Right ventricle myocardium inferior (tissue), 1 donor: ENCODE measurements at regions of chr2 and their contacts with region 1.

Region 1: GRCh38 chr2:167212014-167212648 is 323.9 kb downstream of the XIRP2 start:
- DNase-seq: no peak
- ATAC-seq: no peak

Region 2: GRCh38 chr2:166539340-166540162 is 672.6 kb before region 1 on chr2:
- intact Hi-C with region 1: loop called (anchors 10 kb)
- DNase-seq: no peak
- ATAC-seq: no peak

Region 3: GRCh38 chr2:167127135-167127534 is 85.0 kb before region 1 on chr2:
- intact Hi-C with region 1: loop called (anchors 5 kb)
- DNase-seq: no peak
- ATAC-seq: peak; percentile 44

Region 4: DNA sequence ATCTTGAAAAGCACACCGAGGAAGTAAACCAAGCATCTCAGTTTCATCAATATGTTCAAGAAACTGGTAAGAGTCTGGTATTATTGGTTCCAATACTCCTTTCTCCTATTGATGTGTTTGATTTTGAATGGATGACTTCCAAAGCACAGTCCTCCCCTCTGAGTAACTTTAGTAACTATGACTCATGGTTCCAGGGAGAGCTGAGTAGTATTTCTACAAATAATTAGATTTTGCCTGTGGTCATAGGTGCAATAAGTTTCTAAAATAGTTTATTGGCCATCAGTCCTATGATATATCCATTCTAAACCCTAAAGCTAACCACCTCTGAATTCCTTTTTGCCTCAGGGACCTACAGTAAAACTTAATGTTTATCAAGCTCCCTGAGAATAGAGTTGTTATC is 28.5 kb after region 1 on chr2:
- intact Hi-C with region 1: no loop called
- DNase-seq: no peak
- ATAC-seq: no peak

Region 5: DNA sequence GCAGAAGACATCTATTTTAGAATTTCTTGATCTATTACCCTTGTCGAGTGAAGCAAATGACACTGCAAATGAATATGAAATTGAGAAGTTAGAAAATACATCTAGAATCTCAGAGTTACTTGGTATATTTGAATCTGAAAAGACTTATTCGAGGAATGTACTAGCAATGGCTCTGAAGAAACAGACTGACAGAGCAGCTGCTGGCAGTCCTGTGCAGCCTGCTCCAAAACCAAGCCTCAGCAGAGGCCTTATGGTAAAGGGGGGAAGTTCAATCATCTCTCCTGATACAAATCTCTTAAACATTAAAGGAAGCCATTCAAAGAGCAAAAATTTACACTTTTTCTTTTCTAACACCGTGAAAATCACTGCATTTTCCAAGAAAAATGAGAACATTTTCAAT is 46.6 kb after region 1 on chr2:
- intact Hi-C with region 1: no loop called
- DNase-seq: no peak
- ATAC-seq: no peak

Region 6: DNA sequence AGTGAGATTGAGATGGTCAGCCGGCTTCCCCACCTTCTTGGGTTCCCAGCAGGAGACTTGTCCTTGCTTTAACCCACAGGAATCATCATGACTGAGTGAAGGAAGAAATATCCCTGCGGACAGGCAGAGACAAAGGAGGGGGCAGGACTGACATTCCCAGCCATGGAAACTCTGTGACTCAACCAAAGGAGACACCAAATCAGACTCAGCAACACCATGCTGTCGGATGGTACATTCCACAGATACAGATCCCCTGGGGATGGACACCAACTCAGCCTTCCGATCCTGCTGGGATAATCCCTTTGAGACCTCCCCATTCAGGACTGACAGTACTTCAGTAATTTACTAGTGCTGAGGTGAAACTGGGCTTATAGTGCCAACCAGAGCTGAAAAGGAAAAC is 194.4 kb after region 1 on chr2:
- intact Hi-C with region 1: no loop called
- DNase-seq: no peak
- ATAC-seq: no peak